ENCODE measurements at regions of chr16 and their contacts with region 1.

Region 1: DNA sequence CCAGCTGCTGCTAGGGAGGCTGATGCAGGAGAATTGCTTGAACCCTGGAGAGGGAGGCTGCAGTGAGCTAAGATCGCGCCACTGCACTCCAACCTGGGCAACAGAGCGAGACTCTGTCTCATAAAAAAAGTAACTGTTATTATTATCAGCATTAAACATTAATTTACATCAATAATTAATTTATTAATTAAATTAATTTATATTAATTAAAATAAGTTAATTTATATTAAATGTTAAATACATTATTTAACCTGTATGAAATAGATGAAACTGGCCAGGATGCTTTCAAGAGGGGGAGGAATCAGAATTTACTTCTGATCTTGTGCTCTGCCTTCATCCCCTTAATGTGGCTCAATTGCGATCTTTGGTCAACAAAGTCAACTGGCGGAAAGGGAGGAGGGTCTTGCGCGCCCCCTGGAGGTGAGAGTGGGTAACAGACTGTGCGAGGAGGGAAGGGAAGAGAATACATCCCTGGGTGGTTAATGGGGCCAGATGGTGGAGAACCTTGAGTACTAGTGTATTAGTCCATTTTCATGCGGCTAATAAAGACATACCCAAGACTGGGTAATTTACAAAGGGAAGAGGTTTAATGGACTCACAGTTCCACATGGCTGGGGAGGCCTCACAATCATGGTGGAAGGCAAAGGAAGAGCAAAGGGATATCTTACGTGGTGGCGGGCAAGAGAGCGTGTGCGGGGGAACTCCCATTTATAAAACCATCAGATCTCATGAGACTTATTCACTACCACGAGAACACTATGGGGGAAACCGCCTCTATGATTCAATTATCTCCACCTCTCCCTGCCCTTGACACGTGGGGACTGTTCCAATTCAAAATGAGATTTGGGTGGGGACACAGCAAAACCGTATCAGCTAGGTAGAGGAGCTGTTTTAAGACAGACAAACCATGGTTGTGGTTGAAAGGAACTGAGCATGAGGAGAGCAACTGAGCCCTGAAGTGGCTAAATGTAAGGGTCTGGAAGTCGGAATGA is 15.7 kb upstream of the CPPED1 start:
- DNase-seq: peak; percentile 88
- ATAC-seq: peak; percentile 72
- H3K4me3 Mint-ChIP-seq: no peak overlapping the region
- H3K27ac Mint-ChIP-seq: no peak overlapping the region
- H3K4me1 Mint-ChIP-seq: peaks cover 11% of the 10 kb centered on the region
- H3K27me3 Mint-ChIP-seq: no peaks in the 10 kb centered on the region

Region 2: GRCh38 chr16:12095275-12096156 is 723.9 kb before region 1 on chr16:
- CTCF ChIA-PET with region 1: interaction called, 10 read pairs
- POLR2A ChIA-PET with region 1: no interaction called
- intact Hi-C with region 1: loop called (anchors 5 kb)
- DNase-seq: peak; percentile 83
- ATAC-seq: peak; percentile 44
- H3K4me3 Mint-ChIP-seq: peak overlapping the region; percentile 19
- H3K27ac Mint-ChIP-seq: peak overlapping the region; percentile 28
- H3K4me1 Mint-ChIP-seq: peaks cover 22% of the 10 kb centered on the region
- H3K27me3 Mint-ChIP-seq: no peaks in the 10 kb centered on the region

Region 3: DNA sequence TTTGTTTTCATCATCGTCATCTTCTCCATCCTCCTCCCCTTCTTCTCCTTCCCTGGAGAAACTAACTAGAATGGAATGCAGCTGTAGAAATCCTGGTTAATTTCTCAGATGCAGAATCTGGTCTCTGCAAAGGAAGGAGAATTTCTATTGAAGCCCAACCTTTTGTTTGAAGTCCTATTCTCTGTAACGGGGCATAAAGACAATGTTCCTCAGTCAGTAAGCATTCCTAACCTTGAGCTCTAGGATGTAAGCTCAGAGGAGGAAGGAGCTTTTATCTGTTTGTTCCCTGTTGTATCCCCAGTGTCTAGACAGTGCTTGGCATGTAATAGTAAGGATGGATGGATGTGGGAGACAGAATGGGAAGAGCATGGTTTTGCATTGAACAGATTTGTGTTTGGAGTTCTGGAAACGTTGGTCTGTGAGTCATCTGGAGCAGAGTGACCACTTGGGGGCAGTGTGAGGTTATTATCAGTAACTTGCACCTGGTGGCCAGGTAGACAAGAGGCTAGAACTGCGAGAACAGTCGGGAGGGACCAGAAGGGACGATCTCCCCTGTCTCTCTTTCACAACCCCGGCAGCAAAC is 479.2 kb before region 1 on chr16:
- CTCF ChIA-PET with region 1: no interaction called
- POLR2A ChIA-PET with region 1: no interaction called
- intact Hi-C with region 1: loop called in 1 of 2 experiments (anchors 2 kb)
- DNase-seq: peak; percentile 58
- ATAC-seq: no peak
- H3K4me3 Mint-ChIP-seq: no peak overlapping the region
- H3K27ac Mint-ChIP-seq: no peak overlapping the region
- H3K4me1 Mint-ChIP-seq: peaks cover 4% of the 10 kb centered on the region
- H3K27me3 Mint-ChIP-seq: no peaks in the 10 kb centered on the region

Region 4: DNA sequence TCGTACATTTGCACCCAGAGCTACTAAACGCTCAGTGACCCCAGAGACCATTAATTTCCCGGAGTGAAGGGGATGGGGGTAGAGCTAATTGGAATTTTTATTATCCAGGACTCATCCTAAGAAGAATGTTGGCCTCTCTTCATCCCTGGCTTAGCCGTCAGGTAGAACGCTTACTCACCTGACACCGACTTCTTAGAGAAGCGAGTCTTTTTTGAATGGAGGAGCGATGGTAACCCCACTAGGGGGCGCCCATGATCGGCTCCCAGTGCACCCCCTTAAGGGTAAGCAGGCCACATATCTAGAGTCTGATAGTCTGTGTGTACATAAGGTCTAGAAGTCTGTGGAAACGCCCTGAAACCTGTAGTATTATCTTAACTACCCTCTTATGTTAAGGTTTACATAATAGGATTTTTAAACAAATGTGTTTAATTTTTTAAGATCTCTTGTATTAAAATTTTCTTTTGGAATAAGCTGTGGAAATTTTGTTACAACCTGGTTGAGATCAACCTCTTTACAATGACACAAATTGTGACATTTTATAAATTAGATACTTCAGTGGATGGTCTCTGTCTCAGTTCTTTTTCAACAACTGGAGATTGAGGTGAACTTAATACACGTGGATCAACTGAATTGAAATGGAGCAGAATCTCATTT is 245.6 kb before region 1 on chr16:
- CTCF ChIA-PET with region 1: interaction called, 4 read pairs
- POLR2A ChIA-PET with region 1: no interaction called
- intact Hi-C with region 1: loop called (anchors 1 kb)
- DNase-seq: peak; percentile 89
- ATAC-seq: peak; percentile 91
- H3K4me3 Mint-ChIP-seq: no peak overlapping the region
- H3K27ac Mint-ChIP-seq: peak overlapping the region; percentile 31
- H3K4me1 Mint-ChIP-seq: peaks cover 12% of the 10 kb centered on the region
- H3K27me3 Mint-ChIP-seq: no peaks in the 10 kb centered on the region

Region 5: DNA sequence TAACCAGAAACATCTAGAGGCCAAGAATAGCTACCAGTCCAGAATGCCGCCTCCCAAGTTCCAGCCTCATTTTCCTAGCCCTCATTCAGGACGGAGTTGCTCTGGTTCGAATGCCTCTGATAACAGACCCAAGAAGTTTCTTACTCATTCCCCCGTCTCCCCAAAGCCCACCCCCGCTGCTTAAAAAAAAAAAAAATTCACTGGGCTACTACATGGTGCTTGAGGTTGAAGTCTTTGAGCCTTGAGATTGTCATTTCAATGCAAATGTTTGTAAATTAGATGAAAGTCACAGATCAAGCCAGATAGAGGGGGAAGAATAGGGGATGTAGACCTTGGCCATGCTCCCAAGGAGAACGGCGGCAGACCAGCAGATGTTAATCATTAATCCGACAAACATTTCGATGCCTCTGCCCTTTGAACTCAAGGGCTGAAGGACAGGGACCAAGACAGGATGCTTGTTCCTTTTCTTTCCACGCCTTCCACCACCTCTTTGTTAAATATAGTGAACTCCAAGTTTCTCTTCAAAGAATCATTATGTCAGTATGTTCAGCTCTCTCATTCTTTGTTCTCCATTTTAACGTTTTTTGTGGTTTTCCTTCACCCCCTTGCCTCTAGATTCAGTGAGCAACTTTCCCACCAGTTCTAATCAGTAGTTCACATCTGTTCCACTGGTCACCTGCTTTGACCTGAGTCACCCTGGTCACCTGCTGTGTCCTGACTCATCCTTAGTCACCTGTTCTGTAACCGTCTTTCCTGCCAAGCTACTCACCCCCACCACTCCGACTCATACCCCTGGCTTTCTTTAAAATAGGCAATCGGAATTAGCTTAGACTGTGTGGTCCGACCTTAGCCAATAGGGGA is 206.1 kb before region 1 on chr16:
- CTCF ChIA-PET with region 1: no interaction called
- POLR2A ChIA-PET with region 1: no interaction called
- intact Hi-C with region 1: loop called (anchors 2 to 5 kb)
- DNase-seq: peak; percentile 83
- ATAC-seq: peak; percentile 86
- H3K4me3 Mint-ChIP-seq: peak overlapping the region; percentile 49
- H3K27ac Mint-ChIP-seq: peak overlapping the region; percentile 89
- H3K4me1 Mint-ChIP-seq: peaks cover 50% of the 10 kb centered on the region
- H3K27me3 Mint-ChIP-seq: no peaks in the 10 kb centered on the region

Region 6: DNA sequence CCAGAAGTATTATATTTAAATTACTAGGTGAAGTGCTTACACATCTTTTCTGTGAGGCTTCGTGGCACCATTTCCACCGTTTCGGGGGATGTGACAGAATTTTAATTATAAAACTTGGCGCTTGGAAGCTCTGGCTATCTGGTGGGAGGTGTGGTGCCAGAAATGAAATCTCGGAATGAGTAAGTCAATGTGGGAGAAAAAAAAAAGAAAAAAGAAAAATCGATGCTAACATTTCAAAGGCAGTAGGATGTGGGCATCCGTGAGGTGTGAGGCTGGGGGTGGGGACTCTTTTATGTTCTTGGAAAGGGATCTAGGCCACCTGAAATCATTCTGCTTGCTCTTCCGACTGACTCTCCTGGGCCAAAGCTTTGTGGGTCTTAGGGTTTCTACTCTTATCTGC is 37.6 kb before region 1 on chr16:
- CTCF ChIA-PET with region 1: no interaction called
- POLR2A ChIA-PET with region 1: no interaction called
- intact Hi-C with region 1: no loop called
- DNase-seq: peak; percentile 58
- ATAC-seq: peak; percentile 91
- H3K4me3 Mint-ChIP-seq: no peak overlapping the region
- H3K27ac Mint-ChIP-seq: peak overlapping the region; percentile 31
- H3K4me1 Mint-ChIP-seq: peaks cover 7% of the 10 kb centered on the region
- H3K27me3 Mint-ChIP-seq: no peaks in the 10 kb centered on the region

Region 7: DNA sequence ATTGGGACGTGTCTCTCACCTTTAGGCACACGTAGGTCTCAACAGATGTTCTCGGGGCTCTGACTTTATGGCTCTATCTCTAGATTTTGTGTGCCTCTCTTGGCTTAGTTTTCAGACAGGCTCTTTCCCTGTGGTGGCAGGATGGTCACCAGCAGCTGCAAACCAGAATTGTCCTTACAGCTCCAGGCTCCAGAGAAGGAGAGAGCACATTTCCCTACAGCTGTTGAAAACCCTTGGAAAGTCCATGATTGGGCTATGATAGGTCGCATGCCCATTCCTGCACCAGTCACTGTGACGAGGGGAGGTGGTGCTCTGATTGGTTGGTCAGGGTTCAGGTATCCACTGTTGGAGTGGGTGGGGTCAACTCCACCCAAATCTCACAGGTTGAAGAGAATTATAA is 123.4 kb after region 1 on chr16:
- CTCF ChIA-PET with region 1: no interaction called
- POLR2A ChIA-PET with region 1: no interaction called
- intact Hi-C with region 1: no loop called
- DNase-seq: no peak
- ATAC-seq: no peak
- H3K4me3 Mint-ChIP-seq: no peak overlapping the region
- H3K27ac Mint-ChIP-seq: no peak overlapping the region
- H3K4me1 Mint-ChIP-seq: no peaks in the 10 kb centered on the region
- H3K27me3 Mint-ChIP-seq: peaks cover 21% of the 10 kb centered on the region

Region 8: DNA sequence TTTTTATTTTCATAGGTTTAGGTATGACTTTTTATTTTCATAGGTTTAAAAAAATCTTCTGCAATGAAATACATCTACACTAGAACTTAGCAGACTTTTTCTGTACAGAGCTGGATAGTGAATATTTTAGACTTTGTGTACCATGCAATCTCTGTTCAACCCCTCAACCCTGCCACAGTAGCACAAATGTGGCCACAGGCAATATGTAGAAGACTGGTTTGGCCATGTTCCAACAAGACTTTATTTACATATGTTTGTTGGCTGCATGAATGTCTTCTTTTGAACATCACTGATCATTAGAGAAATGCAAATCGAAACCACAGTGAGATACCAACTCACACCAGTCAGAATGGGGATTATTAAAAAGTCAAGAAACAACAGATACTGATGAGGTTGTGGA is 311.2 kb after region 1 on chr16:
- CTCF ChIA-PET with region 1: no interaction called
- POLR2A ChIA-PET with region 1: no interaction called
- intact Hi-C with region 1: no loop called
- DNase-seq: no peak
- ATAC-seq: no peak
- H3K4me3 Mint-ChIP-seq: no peak overlapping the region
- H3K27ac Mint-ChIP-seq: no peak overlapping the region
- H3K4me1 Mint-ChIP-seq: no peaks in the 10 kb centered on the region
- H3K27me3 Mint-ChIP-seq: peaks cover 3% of the 10 kb centered on the region

Region 9: DNA sequence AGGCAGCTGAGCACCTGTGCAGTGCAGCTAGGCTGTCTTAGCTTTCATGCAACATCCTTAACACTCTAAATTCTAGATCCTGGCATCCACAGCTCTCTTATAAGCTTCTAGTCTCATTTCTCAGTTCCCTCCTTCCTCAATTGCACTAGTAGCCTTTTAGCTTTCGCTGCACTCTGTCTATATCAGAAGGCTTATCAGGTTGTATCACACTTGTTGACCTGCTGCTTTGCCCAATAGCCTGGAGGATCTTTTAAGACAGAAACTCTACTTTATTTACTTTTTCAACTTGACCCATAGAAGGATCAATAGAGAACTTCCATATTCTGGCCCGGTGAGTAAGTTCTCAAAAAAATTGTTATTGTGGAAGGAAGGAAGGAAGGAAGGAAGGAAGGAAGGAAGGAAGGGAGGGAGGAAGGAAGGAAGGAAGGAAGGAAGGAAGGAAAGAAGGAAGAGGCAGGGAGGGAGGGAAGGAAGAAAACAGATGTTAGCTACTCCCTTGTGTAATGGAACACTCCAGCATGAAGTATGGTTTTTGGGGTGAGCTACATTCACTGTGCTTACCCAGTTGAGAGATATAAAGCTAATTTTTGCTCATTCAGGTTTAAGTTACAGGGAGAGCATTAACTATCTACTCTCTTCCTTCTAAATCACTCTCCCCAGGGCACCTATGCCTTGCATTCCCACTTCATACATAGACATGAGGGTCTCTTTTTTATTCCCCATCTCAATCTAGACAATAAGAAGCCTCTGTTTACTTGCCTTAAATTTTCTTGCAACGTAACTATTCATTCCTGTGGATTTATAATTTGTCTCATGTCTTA is 443.1 kb after region 1 on chr16:
- CTCF ChIA-PET with region 1: no interaction called
- POLR2A ChIA-PET with region 1: no interaction called
- intact Hi-C with region 1: no loop called
- DNase-seq: no peak
- ATAC-seq: no peak
- H3K4me3 Mint-ChIP-seq: no peak overlapping the region
- H3K27ac Mint-ChIP-seq: no peak overlapping the region
- H3K4me1 Mint-ChIP-seq: no peaks in the 10 kb centered on the region
- H3K27me3 Mint-ChIP-seq: peaks cover 7% of the 10 kb centered on the region

Measured in activated CD4-positive, alpha-beta T cell treated with anti-CD3 and anti-CD28 coated beads for 36 hours (primary cell).